BJ (cell line): ENCODE measurements at regions of chr2 and their contacts with region 1.

Region 1: GRCh38 chr2:41869542-41870264 is 178.1 kb upstream of the PKDCC start:
- DNase-seq: no peak
- H3K4me3 ChIP-seq: no peak overlapping the region
- H3K27me3 ChIP-seq: peaks cover 4% of the 10 kb centered on the region; the same call in 1 of the 2 replicates
- CTCF ChIP-seq: peak; percentile 84

Region 2: GRCh38 chr2:41835401-41835800 is 34.3 kb before region 1 on chr2:
- CTCF ChIA-PET with region 1: no interaction called
- POLR2A ChIA-PET with region 1: no interaction called
- DNase-seq: no peak
- H3K4me3 ChIP-seq: no peak overlapping the region
- H3K27me3 ChIP-seq: peaks cover 1% of the 10 kb centered on the region; the same call in 1 of the 2 replicates
- CTCF ChIP-seq: no peak

Region 3: DNA sequence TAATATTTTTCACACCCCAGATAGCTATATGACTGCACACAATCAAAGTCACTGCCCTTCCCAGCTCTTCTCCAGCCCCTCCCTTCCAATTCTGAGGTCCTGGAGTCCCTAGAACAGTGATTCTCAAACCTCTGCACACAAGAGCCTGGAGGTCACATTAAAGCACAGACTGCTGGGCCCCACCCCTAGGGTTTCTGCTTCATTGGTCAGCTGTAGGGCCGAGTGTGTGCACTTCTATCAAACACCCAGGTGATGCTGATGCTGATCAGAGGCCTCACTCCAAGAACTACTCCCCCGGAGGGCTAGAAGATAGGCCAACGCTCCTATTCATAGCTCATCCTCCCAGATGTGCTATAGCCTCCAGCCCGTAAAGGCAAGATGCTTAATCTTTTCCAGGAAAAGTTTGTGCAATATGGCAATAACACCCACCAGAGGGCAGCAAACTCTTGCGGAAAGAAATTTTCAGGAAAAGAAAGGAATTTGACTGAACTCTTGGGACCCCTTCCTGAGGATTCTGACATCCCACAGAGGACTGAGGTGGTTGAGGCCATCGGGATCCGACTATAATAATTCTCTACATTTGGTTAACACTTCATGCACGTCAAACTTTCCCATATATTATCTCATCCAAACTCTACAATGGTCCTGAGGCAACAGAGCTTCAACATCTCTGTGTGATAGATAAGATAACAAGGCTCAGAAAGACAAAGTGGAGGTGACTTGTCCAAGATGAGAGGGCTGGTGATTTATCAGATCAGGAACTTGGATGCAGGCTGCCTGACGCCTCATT is 16.1 kb before region 1 on chr2:
- CTCF ChIA-PET with region 1: interaction called, 145 read pairs
- POLR2A ChIA-PET with region 1: no interaction called
- DNase-seq: no peak
- H3K4me3 ChIP-seq: no peak overlapping the region
- H3K27me3 ChIP-seq: peaks cover 2% of the 10 kb centered on the region
- CTCF ChIP-seq: peak; percentile 74

Region 4: DNA sequence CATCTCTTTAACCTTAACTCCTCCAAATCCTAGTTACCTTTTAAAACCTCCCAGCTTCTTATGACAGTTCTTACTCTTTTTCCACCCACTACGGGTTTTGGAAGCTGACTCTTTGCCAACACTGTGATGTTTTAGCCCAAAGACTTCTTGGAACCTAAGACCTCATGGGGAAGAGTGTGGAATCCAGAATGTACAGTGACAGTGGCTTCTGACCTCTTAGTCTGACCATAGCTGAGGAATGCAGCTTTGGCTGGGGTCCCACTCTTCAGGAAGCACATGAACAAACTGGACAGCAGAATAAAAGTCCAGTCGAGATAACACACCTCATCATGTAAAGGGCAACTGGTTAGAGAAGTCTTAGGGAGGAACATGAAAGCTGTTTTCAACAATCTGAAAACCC is 17.1 kb after region 1 on chr2:
- CTCF ChIA-PET with region 1: interaction called, 15 read pairs
- POLR2A ChIA-PET with region 1: no interaction called
- DNase-seq: no peak
- H3K4me3 ChIP-seq: no peak overlapping the region
- H3K27me3 ChIP-seq: no peaks in the 10 kb centered on the region
- CTCF ChIP-seq: no peak

Region 5: DNA sequence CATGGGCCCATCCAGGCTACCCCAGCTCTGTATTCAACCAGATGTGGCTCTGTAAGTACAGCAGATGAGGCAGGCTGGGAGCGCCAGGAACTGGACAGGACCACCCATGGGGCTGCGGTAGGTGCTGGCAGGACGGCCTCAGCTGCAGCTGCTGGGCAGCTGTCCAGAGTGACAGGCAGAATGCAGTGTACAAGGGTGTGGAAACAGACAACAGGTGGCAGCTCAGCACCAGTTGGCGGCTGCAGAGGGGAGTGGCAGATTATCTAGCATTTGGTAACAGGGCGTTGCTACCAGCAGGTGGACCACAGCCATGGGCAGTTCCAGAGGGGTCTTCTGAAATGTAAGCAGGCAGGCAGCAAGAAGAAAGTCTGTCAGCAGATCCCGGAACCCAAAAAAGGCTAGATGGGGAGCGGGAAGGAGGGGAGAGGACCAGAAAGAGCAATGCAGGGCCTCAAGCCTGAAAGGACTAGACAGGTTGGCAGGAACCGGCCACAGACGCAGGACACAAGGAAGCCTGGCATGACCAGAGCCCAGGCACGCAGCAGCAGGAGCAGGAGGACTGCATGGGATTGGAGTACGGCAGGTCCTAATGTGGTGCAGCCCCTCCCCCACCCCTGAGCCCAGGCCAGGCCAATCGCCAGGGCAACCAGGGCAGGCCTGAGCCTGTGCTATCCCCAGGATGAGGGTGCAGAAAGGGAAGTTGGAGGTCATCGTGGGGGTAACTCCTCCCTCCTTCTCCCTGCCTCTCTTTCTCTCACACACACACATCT is 202.8 kb after region 1 on chr2:
- CTCF ChIA-PET with region 1: interaction called, 27 read pairs
- POLR2A ChIA-PET with region 1: no interaction called
- DNase-seq: no peak
- H3K4me3 ChIP-seq: no peak overlapping the region
- H3K27me3 ChIP-seq: peaks cover 29% of the 10 kb centered on the region
- CTCF ChIP-seq: no peak

Region 6: DNA sequence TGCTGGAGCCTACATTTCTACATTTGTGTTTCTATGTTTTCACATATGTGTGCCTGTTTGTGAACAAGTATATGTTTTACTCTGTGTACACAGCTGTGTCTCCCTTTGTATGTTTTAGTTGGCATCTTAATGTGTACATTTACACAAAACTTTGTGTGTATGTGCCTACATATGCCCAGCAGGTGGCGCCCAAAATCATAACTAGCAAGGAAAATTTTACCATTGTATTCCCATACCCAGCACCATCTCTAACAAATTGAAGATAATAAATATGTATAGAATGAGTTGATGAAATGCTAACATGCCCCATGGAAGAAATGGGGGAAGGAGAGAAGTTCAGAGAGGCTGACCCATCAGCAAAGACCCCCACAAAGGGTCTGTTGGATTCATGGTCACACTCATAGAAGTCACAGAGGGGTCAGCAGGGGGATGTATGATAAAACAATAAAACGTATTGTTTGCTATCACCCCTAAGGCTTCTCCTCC is 226.3 kb after region 1 on chr2:
- CTCF ChIA-PET with region 1: interaction called, 422 read pairs
- POLR2A ChIA-PET with region 1: no interaction called
- DNase-seq: no peak
- H3K4me3 ChIP-seq: no peak overlapping the region
- H3K27me3 ChIP-seq: peaks cover 1% of the 10 kb centered on the region; the same call in 1 of the 2 replicates
- CTCF ChIP-seq: peak; percentile 68

Region 7: GRCh38 chr2:42309366-42309765 is 439.7 kb after region 1 on chr2:
- CTCF ChIA-PET with region 1: interaction called, 10 read pairs
- POLR2A ChIA-PET with region 1: no interaction called
- DNase-seq: no peak
- H3K4me3 ChIP-seq: no peak overlapping the region
- H3K27me3 ChIP-seq: no peaks in the 10 kb centered on the region
- CTCF ChIP-seq: no peak